ENCODE measurements at regions of chr12 and their contacts with region 1.

Region 1: DNA sequence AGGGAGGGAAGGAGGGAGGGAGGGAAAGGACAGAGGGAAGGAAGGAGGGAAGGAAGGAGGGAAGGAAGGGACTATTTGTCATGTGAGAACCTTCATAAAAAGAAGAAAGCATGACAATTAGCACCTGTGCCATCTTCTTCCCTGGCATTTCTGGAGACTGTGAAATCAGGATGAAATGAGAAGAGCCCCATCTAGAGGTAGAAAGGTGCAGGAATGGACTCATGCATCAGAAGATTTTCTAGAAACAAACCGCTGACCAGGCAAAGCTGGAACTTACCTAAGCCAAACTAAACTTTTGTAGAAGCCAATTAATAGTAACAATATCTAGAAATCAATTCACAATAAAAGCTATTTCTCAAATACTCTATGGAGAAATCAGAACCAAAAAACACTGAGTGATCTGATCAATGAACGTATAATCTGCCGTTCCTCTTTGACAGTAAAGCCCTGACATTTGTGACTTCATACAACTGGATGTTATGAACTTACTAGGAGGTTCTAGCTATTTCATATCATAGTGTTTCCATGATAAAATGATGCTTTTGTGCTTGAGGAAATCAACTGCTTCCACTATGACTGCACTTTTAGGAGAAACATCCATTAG is 24.4 kb upstream of the CRACR2A start:
- DNase-seq: peak in 1 of 2 donors; percentile 29
- ATAC-seq: peak in 6 of 8 donors; percentile 58 to 82 (median 66)
- H3K4me3 ChIP-seq: no peak overlapping the region
- H3K27ac ChIP-seq: no peak overlapping the region
- H3K4me1 ChIP-seq: peaks cover 0 to 14% (median under 1%) of the 10 kb centered on the region in 9 donors
- H3K27me3 ChIP-seq: no peaks in the 10 kb centered on the region
- CTCF ChIP-seq: peak in 8 of 9 donors; percentile 31 to 80 (median 74)

Region 2: GRCh38 chr12:3342056-3342455 is 435.3 kb before region 1 on chr12:
- intact Hi-C with region 1: loop called in 1 of 10 experiments (anchors 5 kb)
- DNase-seq: peak; percentile 51 to 79
- ATAC-seq: peak; percentile 84 to 93 (median 90)
- H3K4me3 ChIP-seq: no peak overlapping the region
- H3K27ac ChIP-seq: peak overlapping the region in 8 of 10 donors; percentile 20 to 74 (median 55)
- H3K4me1 ChIP-seq: peaks cover 10 to 25% (median 16%) of the 10 kb centered on the region in 9 donors
- H3K27me3 ChIP-seq: peaks cover 0 to 10% (median 0%) of the 10 kb centered on the region in 7 donors
- CTCF ChIP-seq: peak; percentile 28 to 80 (median 63)

Region 3: GRCh38 chr12:3527181-3527580 is 250.1 kb before region 1 on chr12:
- intact Hi-C with region 1: loop called in 2 of 10 experiments (anchors 10 kb)
- DNase-seq: no peak
- ATAC-seq: no peak
- H3K4me3 ChIP-seq: no peak overlapping the region
- H3K27ac ChIP-seq: no peak overlapping the region
- H3K4me1 ChIP-seq: peaks cover 0 to 11% (median 5%) of the 10 kb centered on the region in 9 donors
- H3K27me3 ChIP-seq: no peaks in the 10 kb centered on the region
- CTCF ChIP-seq: no peak

Region 4: DNA sequence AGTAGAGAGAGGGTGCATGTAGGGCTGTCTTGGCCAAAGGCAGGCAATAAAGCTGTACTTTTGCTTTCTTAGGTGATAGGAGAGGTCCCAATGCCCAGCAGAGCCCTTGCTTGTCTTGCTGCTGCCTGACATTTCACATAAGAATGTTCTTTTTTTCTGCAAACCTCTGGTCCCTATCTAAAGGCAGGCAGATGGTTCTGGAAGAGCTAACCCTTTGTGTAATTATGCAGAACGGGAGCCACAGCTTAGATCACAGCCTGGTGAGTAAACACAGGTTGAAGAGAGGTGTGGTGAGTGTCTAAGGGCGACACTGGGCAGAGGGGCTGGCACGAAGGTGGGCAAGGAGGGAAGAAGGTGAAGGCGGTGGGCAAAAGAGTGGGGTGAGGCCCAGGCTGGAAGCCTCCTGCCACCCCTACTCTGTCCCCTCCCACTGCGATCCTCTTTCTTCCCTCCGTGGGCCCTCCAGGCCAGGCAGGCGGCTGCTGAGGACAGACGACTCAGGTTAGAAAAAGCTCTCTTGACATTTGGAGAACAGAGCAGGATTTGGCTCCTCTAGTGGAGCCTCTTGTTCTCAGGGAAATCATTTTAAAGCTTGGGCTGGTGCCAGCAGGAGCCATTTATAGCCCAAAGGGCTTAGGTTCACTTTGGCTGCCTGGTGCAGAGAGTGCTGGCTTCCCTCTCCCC is 243.5 kb before region 1 on chr12:
- intact Hi-C with region 1: loop called in 2 of 10 experiments (anchors 10 kb)
- DNase-seq: peak; percentile 36 to 73
- ATAC-seq: peak; percentile 72 to 88 (median 82)
- H3K4me3 ChIP-seq: no peak overlapping the region
- H3K27ac ChIP-seq: peak overlapping the region; percentile 50 to 79 (median 72)
- H3K4me1 ChIP-seq: peaks cover 0 to 40% (median 21%) of the 10 kb centered on the region in 9 donors
- H3K27me3 ChIP-seq: peaks cover 0 to 3% (median 0%) of the 10 kb centered on the region in 7 donors
- CTCF ChIP-seq: peak in 7 of 9 donors; percentile 7 to 52 (median 23)

Region 5: GRCh38 chr12:3658327-3659163 is 118.8 kb before region 1 on chr12:
- intact Hi-C with region 1: loop called in 9 of 10 experiments (anchors 5 to 10 kb)
- DNase-seq: peak; percentile 27 to 35
- ATAC-seq: peak; percentile 45 to 63 (median 51)
- H3K4me3 ChIP-seq: no peak overlapping the region
- H3K27ac ChIP-seq: no peak overlapping the region
- H3K4me1 ChIP-seq: peaks cover 0 to 24% (median 13%) of the 10 kb centered on the region in 9 donors
- H3K27me3 ChIP-seq: no peaks in the 10 kb centered on the region
- CTCF ChIP-seq: peak; percentile 20 to 64 (median 47)

Region 6: GRCh38 chr12:3680896-3681594 is 96.3 kb before region 1 on chr12:
- intact Hi-C with region 1: loop called in 3 of 10 experiments (anchors 5 to 10 kb)
- DNase-seq: peak; percentile 57 to 81
- ATAC-seq: peak in 4 of 8 donors; percentile 25 to 50 (median 46)
- H3K4me3 ChIP-seq: no peak overlapping the region
- H3K27ac ChIP-seq: peak overlapping the region in 1 of 10 donors; percentile 11
- H3K4me1 ChIP-seq: peaks cover 2 to 46% (median 22%) of the 10 kb centered on the region in 9 donors
- H3K27me3 ChIP-seq: no peaks in the 10 kb centered on the region
- CTCF ChIP-seq: peak in 6 of 9 donors; percentile 11 to 62 (median 48)

Measured in heart right ventricle (tissue), 16 donors.